Left ventricle myocardium superior (tissue), 1 donor: ENCODE measurements at regions of chr2 and their contacts with region 1.

Region 1: GRCh38 chr2:191165176-191165643 is 14.4 kb upstream of the STAT4 start:
- DNase-seq: no peak
- ATAC-seq: peak; percentile 83

Region 2: DNA sequence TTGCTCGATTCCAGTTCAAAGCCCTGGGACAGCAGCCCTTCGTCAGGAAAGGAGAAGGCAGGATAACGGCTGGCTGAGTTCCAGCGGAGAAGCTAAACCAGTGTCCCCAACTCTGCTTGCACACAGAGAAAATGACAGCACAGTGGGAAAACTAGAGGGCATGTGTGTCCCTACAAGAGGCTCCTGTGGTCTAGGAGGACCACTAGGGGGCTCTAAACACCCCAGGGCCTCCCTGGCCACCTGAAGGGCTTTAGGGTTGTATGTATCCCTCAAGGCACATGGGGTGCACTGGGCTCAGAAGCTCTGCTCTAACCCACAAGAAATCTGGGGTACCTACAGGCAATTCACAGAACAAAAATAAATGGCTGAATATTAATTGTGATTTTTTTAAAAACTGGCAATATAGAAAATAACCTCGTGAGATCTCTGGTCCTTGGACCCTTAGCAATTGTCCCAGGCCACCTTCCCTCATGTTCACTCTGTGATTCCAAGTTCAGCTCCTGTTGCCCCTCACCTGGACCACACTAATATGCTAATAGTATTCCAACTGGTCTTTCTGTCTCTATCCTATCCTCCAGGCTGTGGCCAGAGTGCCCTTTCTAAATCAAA is 168.8 kb before region 1 on chr2:
- intact Hi-C with region 1: no loop called
- DNase-seq: no peak
- ATAC-seq: peak; percentile 71

Region 3: DNA sequence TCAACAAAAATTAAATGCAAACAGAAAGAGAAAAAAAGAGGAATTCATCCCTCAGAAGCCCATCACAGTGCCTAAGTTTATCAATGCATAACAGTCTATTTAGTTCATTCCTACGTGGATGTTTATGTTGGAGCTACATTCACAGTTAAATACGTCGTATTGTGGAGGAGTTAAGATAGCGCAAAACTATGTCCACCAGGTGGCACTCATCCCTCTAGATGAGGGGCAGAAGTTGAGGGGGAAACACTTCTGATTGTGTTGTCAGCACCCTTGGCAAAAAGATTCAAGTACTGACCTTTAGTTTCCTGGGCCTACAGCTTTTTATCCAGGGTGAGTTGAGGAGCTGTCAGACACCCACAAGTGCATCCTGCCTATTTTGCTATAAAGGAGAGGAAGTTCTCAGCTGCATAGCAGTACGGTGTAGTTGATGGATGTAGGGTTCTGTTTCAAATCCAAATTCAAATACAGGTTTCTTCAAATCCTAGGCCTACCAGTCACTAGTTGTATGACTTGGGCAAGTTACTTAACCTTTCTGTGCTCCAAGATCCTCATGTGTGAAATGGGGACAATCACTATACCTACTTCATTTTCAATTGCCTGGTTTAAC is 53.2 kb after region 1 on chr2:
- intact Hi-C with region 1: loop called (anchors 10 kb)
- DNase-seq: no peak
- ATAC-seq: peak; percentile 59

Region 4: DNA sequence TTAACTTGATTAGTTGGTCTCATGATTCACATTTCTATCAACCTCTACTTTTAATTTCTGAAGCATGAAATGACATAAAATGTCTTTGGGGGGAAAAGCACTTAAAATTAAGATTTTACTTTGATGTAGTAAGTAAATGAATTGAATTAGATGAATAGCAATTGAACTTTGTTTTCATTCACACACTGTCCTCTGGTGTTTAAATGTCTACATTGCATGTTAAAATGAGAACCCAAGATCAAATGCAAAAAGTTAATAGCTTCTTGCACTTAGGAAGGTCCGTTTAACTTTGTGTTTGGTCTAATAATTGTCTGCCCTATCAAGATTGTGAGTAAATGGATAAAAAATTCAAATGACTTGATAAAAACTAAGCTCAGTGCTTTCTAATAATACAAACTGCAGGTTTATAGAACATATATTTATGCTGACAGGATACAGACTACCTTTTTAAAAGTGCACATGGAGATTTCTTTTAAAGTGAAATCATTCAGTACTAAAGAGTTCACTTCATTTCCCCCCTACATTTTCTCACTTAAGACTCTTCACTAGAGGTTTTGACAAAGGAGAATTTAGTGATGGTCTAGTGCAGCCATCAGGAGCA is 356.5 kb after region 1 on chr2:
- intact Hi-C with region 1: loop called (anchors 5 kb)
- DNase-seq: no peak
- ATAC-seq: no peak